PC-3 (cell line): ENCODE measurements at regions of chr2 and their contacts with region 1.

Region 1: DNA sequence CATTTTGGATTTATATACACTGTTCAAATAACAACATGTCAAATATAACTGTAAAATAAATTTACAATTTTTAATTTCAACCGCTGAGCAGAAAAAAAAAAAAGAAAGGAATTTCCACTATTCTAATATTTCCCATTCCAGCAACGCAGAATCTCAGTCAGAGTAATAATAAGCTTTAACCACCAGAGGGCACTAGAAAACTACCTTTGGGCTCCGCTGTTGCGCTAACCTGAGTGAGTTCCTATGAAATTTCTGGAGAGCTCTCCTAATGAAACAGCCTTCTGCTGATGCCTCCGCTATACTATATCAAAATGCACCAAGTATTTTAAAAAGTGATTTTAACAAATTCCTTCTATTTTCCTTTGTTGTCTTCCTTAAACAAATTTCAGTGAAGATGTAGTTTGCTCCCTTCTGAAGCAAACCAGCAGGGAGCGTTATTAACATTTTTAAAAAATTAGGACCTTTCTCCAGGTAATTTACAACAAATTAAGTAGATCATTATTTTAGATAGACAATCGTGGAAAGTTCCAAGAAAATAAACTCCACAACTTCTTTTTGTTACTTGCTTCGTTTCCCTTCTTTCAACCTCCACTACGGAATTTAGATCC is 23.0 kb downstream of the ERMN start:
- DNase-seq: peak; percentile 81
- ATAC-seq: peak; percentile 64
- H3K4me3 ChIP-seq: no peak overlapping the region
- H3K27ac ChIP-seq: no peak overlapping the region
- H3K4me1 ChIP-seq: no peaks in the 10 kb centered on the region
- H3K27me3 ChIP-seq: no peaks in the 10 kb centered on the region
- CTCF ChIP-seq: peak; percentile 82

Region 2: DNA sequence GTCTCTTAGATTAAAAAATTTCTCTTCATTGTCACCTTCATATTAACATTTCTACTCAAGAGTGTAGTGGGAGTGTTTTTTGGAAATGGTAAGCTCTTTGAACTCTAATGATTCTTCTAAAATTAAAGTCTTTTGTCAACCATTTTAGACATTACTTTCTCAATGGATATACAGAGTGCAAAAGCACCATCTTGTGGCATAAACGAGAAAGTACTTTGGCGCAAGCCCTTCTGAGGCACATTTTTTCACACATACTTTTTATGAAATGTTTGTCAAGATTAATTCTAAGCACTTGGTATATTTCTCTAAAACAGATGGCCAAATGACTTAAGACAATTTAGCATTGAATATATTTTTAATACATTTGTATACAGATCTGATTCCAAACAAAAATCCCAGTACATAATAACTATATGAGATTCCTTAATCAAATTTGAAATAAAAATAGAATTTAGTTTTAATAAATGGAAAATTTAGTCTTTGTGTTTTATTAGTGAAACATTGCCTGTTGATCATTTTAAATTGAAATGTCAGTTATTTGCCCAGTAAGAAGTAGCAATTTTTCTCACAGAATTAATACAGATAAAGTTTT is 108.4 kb before region 1 on chr2:
- CTCF ChIA-PET with region 1: no interaction called
- POLR2A ChIA-PET with region 1: no interaction called
- intact Hi-C with region 1: loop called (anchors 10 kb)
- DNase-seq: peak; percentile 79
- ATAC-seq: peak; percentile 45
- H3K4me3 ChIP-seq: no peak overlapping the region
- H3K27ac ChIP-seq: no peak overlapping the region
- H3K4me1 ChIP-seq: no peaks in the 10 kb centered on the region
- H3K27me3 ChIP-seq: no peaks in the 10 kb centered on the region
- CTCF ChIP-seq: peak; percentile 89

Region 3: DNA sequence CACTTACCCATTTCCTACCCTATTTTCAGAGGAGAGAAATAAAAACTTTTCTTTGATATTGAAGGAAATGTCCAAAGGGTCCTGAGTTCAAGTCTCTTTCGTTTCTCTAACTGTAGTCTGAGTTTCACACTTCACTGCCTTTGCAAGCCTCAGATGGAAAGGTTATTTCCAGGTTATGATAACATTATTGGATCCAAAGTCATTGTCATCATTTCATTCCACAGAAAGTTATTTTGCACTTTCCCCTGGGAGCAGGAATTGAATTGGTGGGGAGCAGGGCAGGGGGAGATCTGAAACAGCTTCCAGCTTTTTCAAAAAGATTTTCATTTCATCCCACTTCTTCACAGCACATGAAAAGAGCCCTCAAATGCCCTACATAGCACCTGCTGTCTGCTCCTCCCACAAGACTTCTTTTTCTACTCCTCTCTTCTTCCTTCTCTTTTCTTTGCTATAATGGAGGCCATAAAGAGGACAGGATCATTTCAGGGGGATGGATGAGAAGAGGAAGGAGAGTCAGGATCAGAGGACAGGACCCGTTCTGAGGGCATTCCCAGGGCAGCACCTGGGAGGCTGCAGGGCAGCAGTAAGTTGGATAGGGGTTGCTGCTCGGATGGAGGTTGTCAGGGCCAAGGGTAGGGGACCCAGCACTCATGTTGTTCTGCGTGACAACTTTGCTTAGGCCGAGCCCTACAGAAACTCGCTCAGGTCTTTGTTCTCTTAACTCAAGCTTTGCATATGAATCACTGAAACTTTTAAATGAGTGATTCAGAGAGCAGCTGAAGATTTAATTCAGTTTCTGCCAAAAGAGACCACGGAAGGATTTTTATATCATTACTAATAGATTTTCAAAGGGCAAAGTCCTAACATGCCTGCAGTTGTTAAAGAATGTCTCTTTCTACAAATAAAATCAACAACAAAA is 56.5 kb before region 1 on chr2:
- CTCF ChIA-PET with region 1: no interaction called
- POLR2A ChIA-PET with region 1: no interaction called
- intact Hi-C with region 1: loop called (anchors 1 kb)
- DNase-seq: peak; percentile 91
- ATAC-seq: peak; percentile 94
- H3K4me3 ChIP-seq: peak overlapping the region; percentile 20; the same call in 1 of the 2 replicates
- H3K27ac ChIP-seq: peak overlapping the region; percentile 98
- H3K4me1 ChIP-seq: peaks cover 23% of the 10 kb centered on the region
- H3K27me3 ChIP-seq: no peaks in the 10 kb centered on the region
- CTCF ChIP-seq: no peak

Region 4: DNA sequence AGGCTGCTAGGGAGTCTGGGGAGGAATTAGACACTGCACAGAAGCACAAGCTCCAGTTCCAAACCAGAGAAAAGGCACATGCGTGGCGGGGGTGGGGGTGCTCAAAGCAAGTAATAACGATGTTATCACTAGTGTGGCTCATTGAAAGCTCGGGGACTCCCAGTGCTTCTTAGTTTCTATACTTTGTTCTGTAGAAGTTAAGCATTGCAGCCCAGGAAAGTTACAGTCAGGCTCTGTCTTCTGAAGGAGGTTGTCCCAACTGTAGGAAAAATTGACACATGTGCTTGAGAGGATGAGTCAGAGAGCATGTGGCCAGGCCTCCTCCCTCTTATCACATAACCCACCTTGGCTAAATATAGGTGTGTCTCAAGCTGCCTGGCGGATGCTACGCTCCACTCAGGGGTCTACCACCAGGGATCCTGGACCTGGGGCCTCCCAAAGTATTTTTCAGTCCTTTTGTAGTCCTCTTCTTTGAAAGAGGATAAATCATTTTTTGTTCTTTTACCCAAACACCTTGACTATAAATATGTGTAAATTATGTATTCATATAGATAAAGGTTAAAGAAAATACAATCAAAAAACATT is 41.3 kb before region 1 on chr2:
- CTCF ChIA-PET with region 1: no interaction called
- POLR2A ChIA-PET with region 1: no interaction called
- intact Hi-C with region 1: no loop called
- DNase-seq: peak; percentile 86
- ATAC-seq: peak; percentile 92
- H3K4me3 ChIP-seq: peak overlapping the region; percentile 8; the same call in 1 of the 2 replicates
- H3K27ac ChIP-seq: peak overlapping the region; percentile 97
- H3K4me1 ChIP-seq: peaks cover 23% of the 10 kb centered on the region
- H3K27me3 ChIP-seq: no peaks in the 10 kb centered on the region
- CTCF ChIP-seq: no peak

Region 5: DNA sequence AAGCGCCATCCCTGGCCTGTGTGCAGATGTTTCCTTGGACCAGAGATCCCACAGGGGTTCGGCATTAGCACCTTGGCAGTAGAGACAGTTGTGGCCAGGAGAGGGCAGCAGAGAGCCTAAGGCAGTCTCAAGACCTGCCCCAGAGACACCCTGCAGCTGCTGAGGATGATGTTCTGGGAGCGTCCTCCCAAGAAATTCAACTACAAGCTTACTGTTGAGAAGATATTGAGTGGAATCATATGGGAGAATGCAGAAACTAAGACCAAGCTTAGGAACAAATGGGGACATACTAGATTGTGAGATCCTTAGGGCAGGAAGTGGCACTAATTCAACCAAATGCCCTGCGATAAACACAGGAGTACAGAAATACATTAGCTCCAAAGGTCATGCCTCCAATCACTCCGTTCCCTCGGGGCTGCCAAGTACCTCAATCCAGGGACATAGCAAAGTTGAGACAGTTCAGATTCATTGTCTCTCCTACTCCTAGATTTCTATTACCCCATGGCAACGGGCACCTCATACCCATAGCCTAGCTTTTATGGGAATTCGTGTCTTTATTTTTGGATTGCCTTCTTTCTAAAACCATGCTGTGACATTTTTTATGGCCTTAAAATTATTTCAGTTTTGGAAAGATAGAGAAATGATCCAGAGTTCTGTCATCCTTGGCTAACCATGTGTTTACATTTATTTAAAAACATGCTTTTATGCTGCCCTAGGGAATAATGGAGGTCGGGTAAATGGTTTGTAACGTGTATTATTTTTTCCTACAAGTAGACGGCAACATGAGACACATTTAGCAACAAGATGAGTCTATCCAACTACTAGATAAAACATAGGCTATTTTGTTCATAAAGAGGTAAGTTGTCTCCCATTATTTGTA is 25.3 kb after region 1 on chr2:
- CTCF ChIA-PET with region 1: interaction called, 4 read pairs
- POLR2A ChIA-PET with region 1: no interaction called
- intact Hi-C with region 1: loop called (anchors 2 kb)
- DNase-seq: peak; percentile 83
- ATAC-seq: peak; percentile 89
- H3K4me3 ChIP-seq: no peak overlapping the region
- H3K27ac ChIP-seq: no peak overlapping the region
- H3K4me1 ChIP-seq: peaks cover 13% of the 10 kb centered on the region
- H3K27me3 ChIP-seq: no peaks in the 10 kb centered on the region
- CTCF ChIP-seq: peak; percentile 91

Region 6: GRCh38 chr2:157336137-157337010 is 33.8 kb after region 1 on chr2:
- CTCF ChIA-PET with region 1: interaction called, 18 read pairs
- POLR2A ChIA-PET with region 1: no interaction called
- intact Hi-C with region 1: loop called (anchors 1 kb)
- DNase-seq: peak; percentile 67
- ATAC-seq: peak; percentile 75
- H3K4me3 ChIP-seq: no peak overlapping the region
- H3K27ac ChIP-seq: no peak overlapping the region
- H3K4me1 ChIP-seq: no peaks in the 10 kb centered on the region
- H3K27me3 ChIP-seq: no peaks in the 10 kb centered on the region
- CTCF ChIP-seq: peak; percentile 89

Region 7: DNA sequence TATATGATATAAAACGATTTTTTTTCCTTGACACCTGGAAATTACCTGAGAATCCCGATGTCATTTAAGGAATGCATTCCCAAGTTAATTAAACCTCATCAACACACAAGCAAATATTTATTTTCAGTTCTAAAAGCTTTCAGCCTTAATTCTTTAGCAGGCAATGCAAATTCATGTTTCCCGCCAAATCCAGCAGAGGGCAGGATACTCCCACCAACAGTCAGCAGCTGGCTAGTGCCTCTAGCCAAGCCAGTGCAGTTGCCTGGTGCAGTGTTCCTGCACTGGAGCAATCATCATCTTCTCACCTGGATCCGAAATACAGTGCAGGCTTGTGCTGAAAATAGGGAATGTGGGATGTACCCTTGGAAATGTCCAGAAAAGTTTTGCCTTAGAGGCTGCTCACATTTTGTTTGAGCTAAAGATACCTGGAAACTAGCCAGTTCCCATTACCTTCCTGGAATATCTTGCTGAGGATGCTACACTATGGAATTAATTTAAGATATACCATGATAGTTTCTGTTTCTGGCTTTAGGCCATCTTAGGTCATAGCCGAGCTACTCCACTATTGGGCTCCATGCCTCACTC is 189.7 kb after region 1 on chr2:
- CTCF ChIA-PET with region 1: interaction called, 4 read pairs
- POLR2A ChIA-PET with region 1: no interaction called
- intact Hi-C with region 1: loop called (anchors 5 kb)
- DNase-seq: peak; percentile 77
- ATAC-seq: peak; percentile 82
- H3K4me3 ChIP-seq: no peak overlapping the region
- H3K27ac ChIP-seq: no peak overlapping the region
- H3K4me1 ChIP-seq: peaks cover 12% of the 10 kb centered on the region
- H3K27me3 ChIP-seq: no peaks in the 10 kb centered on the region
- CTCF ChIP-seq: peak; percentile 87

Region 8: DNA sequence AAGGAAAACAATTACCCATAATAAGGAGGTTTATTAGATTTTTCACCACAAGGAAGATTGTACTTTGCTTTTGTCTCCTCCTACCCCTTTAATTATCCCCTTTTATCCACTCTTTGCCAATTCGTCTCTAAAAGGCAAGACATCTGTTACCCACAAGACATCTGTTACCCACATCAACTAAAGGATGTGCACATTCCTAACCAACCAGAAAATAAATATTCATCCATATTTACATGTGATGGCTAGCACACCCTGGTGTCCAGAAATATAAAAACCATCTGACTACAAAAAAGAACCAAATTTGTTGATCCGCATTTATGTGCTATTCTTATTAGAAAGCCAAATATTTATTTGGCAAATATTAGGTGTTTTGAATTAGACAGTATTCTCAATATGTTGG is 290.4 kb after region 1 on chr2:
- CTCF ChIA-PET with region 1: no interaction called
- POLR2A ChIA-PET with region 1: no interaction called
- intact Hi-C with region 1: loop called (anchors 2 kb)
- DNase-seq: peak; percentile 57
- ATAC-seq: peak; percentile 40
- H3K4me3 ChIP-seq: no peak overlapping the region
- H3K27ac ChIP-seq: no peak overlapping the region
- H3K4me1 ChIP-seq: no peaks in the 10 kb centered on the region
- H3K27me3 ChIP-seq: peaks cover 50% of the 10 kb centered on the region
- CTCF ChIP-seq: peak; percentile 76

Region 9: GRCh38 chr2:157644776-157645175 is 342.2 kb after region 1 on chr2:
- CTCF ChIA-PET with region 1: no interaction called
- POLR2A ChIA-PET with region 1: no interaction called
- intact Hi-C with region 1: no loop called
- DNase-seq: no peak
- ATAC-seq: no peak
- H3K4me3 ChIP-seq: no peak overlapping the region
- H3K27ac ChIP-seq: no peak overlapping the region
- H3K4me1 ChIP-seq: no peaks in the 10 kb centered on the region
- H3K27me3 ChIP-seq: no peaks in the 10 kb centered on the region
- CTCF ChIP-seq: no peak